Activated CD4-positive, alpha-beta memory T cell treated with anti-CD3 and anti-CD28 coated beads for 36 hours (primary cell): ENCODE measurements at regions of chr19 and their contacts with region 1.

Region 1: GRCh38 chr19:34359140-34359953 is 5.6 kb upstream of the GPI start:
- DNase-seq: peak; percentile 99
- H3K4me3 Mint-ChIP-seq: peak overlapping the region; percentile 86
- H3K27ac Mint-ChIP-seq: peak overlapping the region; percentile 90
- H3K4me1 Mint-ChIP-seq: peaks cover 29% of the 10 kb centered on the region
- H3K27me3 Mint-ChIP-seq: no peaks in the 10 kb centered on the region

Region 2: GRCh38 chr19:34345947-34346351 is 13.4 kb before region 1 on chr19:
- CTCF ChIA-PET with region 1: interaction called, 14 read pairs
- POLR2A ChIA-PET with region 1: interaction called, 3 read pairs
- intact Hi-C with region 1: no loop called
- DNase-seq: peak; percentile 84
- H3K4me3 Mint-ChIP-seq: no peak overlapping the region
- H3K27ac Mint-ChIP-seq: no peak overlapping the region
- H3K4me1 Mint-ChIP-seq: peaks cover 17% of the 10 kb centered on the region
- H3K27me3 Mint-ChIP-seq: no peaks in the 10 kb centered on the region